CD8-positive, alpha-beta T cell (primary cell): ENCODE measurements at regions of chr5 and their contacts with region 1.

Region 1: DNA sequence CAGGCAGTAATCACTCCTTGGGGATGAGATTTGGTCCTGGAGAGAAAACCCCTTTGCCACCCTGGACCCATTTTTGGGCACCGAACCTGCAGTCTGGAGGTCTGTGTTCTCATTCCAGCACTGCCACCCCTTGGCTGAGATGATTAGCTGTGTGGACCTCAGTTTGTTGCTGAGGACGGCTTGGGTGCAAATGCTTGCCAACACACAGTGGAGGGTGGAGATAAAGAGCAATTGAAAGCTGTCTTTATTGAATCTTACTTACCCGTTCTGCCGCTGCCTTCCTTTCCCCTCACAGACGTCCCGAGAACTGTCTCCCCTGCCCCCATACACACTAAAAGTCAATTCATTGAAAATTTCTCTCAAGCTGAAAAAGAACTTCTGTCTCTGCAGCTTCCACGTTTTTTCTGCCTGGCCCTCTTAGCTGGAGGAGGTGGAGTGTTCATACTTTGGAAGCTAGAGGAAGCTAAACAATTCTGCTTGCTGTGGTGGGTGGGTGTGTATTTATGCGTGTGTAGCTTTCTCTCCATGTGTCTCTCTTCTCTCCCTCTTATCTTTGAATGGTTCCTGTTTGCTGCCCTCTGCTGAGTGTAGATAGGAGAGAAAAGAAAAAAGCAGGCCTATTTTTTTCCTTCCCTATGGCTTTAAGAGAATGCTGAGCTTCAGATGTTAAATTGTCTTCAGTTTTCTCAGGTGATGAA is 6.6 kb downstream of the GALNT10 start:
- DNase-seq: peak in 2 of 9 experiments; percentile 30 to 57
- ATAC-seq: peak; percentile 10
- H3K4me3 ChIP-seq: no peak overlapping the region
- H3K4me3 Mint-ChIP-seq: peak overlapping the region; percentile 35
- H3K27ac ChIP-seq: peak overlapping the region in 1 of 2 experiments; percentile 72
- H3K27ac Mint-ChIP-seq: peak overlapping the region; percentile 94
- H3K4me1 ChIP-seq: peaks cover 57% of the 10 kb centered on the region
- H3K4me1 Mint-ChIP-seq: peaks cover 68% of the 10 kb centered on the region
- H3K27me3 ChIP-seq: no peaks in the 10 kb centered on the region
- H3K27me3 Mint-ChIP-seq: no peaks in the 10 kb centered on the region
- CTCF ChIP-seq: no peak

Region 2: DNA sequence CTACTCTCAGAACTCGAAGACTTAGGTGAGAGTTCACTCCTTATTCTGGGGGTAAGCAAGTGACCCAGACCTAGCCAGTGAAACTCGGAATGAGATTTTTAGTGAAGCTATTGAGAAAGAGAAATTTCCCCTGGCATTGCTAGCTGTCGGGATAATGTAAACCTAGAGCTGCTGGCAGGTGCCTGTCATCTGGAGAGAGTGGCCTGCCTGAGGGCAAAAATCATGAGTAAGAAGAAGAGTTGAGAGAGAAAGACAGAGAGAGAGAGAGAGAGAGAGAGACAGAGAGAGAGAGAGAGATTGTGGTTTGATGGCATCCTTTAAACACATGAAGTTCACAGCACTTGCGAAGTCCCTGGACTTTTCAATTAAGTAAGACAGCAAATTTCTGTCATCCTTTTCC is 23.6 kb before region 1 on chr5:
- CTCF ChIA-PET with region 1: no interaction called
- POLR2A ChIA-PET with region 1: no interaction called
- intact Hi-C with region 1: no loop called
- DNase-seq: no peak
- ATAC-seq: no peak
- H3K4me3 ChIP-seq: no peak overlapping the region
- H3K4me3 Mint-ChIP-seq: no peak overlapping the region
- H3K27ac ChIP-seq: no peak overlapping the region
- H3K27ac Mint-ChIP-seq: no peak overlapping the region
- H3K4me1 ChIP-seq: no peaks in the 10 kb centered on the region
- H3K4me1 Mint-ChIP-seq: no peaks in the 10 kb centered on the region
- H3K27me3 ChIP-seq: no peaks in the 10 kb centered on the region
- H3K27me3 Mint-ChIP-seq: peaks cover 5% of the 10 kb centered on the region
- CTCF ChIP-seq: no peak

Region 3: GRCh38 chr5:154221371-154221896 is 24.3 kb after region 1 on chr5:
- CTCF ChIA-PET with region 1: interaction called, 4 read pairs
- POLR2A ChIA-PET with region 1: interaction called, 4 read pairs
- intact Hi-C with region 1: loop called (anchors 2 kb)
- DNase-seq: peak; percentile 22 to 79 (median 57)
- ATAC-seq: peak; percentile 97
- H3K4me3 ChIP-seq: no peak overlapping the region
- H3K4me3 Mint-ChIP-seq: peak overlapping the region; percentile 37
- H3K27ac ChIP-seq: peak overlapping the region; percentile 18 to 59
- H3K27ac Mint-ChIP-seq: peak overlapping the region; percentile 94
- H3K4me1 ChIP-seq: peaks cover 19% of the 10 kb centered on the region
- H3K4me1 Mint-ChIP-seq: peaks cover 40% of the 10 kb centered on the region
- H3K27me3 ChIP-seq: no peaks in the 10 kb centered on the region
- H3K27me3 Mint-ChIP-seq: no peaks in the 10 kb centered on the region
- CTCF ChIP-seq: no peak